ENCODE measurements at regions of chr1 and their contacts with region 1.

Region 1: GRCh38 chr1:150149271-150150132 is at the start of gene PLEKHO1:
- DNase-seq: peak; percentile 94
- ATAC-seq: peak; percentile 84
- total RNA-seq, gene PLEKHO1: 53.2 TPM

Region 2: DNA sequence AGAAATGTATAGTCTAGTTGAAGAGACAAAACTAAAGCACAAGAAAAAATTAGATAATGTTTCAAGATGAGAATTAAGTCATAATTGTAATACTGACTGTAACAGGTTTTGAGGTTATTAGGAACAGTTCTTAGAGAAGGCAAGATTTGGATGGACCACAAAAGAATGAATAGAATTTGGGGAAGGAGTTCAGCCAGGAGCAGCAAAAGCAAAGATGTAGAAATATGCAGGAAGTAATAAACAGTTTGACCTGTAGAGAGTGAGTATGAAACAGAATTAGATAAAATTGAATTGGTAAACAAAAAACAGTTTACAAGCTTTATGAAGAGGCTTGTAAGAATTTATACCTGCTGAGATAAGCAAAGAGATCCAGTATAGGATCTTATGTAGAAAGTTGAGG is 65.6 kb before region 1 on chr1:
- intact Hi-C with region 1: loop called (anchors 5 kb)
- DNase-seq: no peak
- ATAC-seq: no peak

Region 3: DNA sequence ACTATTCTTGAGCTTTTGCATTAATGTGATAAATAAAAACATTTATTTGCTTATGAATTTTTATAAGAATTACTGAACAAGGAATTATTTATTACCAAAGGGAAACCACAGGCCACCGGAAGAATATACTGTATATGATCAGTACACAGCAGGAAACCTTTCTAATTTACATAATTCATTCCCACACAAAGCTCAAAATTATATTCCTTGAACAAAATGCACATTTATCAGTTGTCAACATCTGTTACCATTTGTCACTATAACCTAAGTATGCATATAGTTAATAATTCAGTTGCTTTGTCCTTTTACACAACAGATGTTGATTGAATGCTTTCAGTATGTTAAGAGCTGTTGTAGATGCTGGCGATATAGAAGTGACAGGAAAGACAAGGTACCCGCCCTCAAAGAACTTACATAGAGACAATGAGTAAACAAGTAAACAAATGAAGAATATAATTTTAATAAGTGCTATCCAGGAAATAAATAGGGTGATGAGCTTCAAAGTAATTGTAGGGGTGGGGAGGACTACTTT is 54.7 kb before region 1 on chr1:
- intact Hi-C with region 1: loop called (anchors 5 kb)
- DNase-seq: no peak
- ATAC-seq: no peak

Region 4: GRCh38 chr1:150110116-150110515 is 39.4 kb before region 1 on chr1:
- intact Hi-C with region 1: loop called (anchors 5 kb)
- DNase-seq: no peak
- ATAC-seq: no peak

Region 5: DNA sequence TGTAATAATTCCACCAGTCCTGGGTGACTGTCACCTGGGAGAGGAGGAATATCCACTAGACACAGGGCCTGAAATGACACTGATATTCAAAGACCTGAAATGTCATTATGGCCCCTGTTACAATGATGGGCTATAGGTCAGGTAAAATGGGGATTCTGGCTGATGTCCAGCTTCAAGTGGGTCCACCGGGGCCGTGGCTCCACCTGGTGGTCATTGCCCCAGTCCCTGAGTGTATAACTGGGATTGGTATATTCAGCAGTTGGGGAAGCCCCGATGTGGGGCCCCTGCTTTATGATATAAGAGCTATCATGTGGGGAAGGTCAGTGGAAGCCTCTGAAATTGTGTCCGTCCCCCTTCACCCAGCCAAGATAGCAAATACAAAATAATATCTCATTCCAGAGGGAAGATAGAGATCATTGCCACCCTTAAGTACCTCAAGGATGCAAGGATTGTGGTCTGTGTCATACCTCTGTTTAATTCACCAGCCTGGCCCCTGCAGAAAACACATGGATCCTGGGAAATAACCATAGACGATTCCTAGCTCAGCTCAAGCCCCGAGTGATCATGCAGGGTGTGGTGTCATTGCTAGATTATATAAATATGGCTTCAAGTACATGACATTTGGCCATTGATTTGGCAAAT is 19.6 kb after region 1 on chr1:
- intact Hi-C with region 1: no loop called
- DNase-seq: peak; percentile 85
- ATAC-seq: peak; percentile 61

Region 6: GRCh38 chr1:150192012-150192411 is 42.5 kb after region 1 on chr1:
- intact Hi-C with region 1: no loop called
- DNase-seq: no peak
- ATAC-seq: peak; percentile 79

Region 7: GRCh38 chr1:150233359-150234308 is 84.1 kb after region 1 on chr1:
- intact Hi-C with region 1: no loop called
- DNase-seq: no peak
- ATAC-seq: no peak

Measured in Right ventricle myocardium inferior (tissue), 1 donor.